Activated naive CD4-positive, alpha-beta T cell treated with anti-CD3 and anti-CD28 coated beads, Interleukin-2, amount 10 ng/mL, durations not matched to agents 7 days and 5 days (primary cell): ENCODE measurements at regions of chr18 and their contacts with region 1.

Region 1: DNA sequence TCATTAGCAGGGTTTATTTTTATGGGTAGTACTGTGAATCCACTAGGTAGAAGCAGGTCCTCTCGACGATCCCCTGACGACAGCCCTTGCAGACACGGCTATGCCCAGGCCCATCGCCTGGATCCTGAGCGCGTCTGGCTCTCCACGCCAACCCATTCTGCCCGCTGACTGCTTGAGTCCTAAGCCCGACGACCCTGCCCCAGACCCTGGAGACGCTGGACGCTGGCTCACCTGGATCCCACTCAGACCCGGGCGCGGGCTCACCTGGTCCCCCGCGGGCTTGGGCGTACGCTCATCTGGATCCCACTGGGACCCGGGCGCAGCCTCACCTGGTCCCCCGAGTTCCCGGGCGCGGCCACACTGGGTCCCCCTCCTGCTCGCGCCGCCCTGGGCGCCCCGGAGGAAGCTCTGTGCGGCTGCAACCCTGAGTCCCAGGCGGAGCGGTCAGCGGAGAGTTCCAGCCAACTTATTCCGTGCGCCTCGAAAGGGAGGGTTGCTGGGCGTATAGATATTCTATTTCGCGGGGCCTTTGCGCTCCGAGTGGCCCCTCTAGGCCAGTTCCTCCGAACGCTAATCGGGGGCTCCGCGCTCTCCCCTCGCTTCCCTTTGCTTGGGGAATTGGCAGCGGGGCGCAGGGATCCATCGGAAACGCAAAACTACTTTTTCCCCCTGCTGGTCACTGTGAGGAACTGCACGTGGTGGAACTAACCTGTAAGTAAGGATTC is 22.4 kb upstream of the RMP24 start:
- DNase-seq: peak; percentile 61
- H3K4me3 Mint-ChIP-seq: peak overlapping the region; percentile 73
- H3K27ac Mint-ChIP-seq: no peak overlapping the region
- H3K4me1 Mint-ChIP-seq: peaks cover 3% of the 10 kb centered on the region
- H3K27me3 Mint-ChIP-seq: peaks cover 23% of the 10 kb centered on the region

Region 2: GRCh38 chr18:35756506-35757117 is 193.5 kb before region 1 on chr18:
- CTCF ChIA-PET with region 1: interaction called, 13 read pairs
- DNase-seq: peak; percentile 67
- H3K4me3 Mint-ChIP-seq: no peak overlapping the region
- H3K27ac Mint-ChIP-seq: no peak overlapping the region
- H3K4me1 Mint-ChIP-seq: no peaks in the 10 kb centered on the region
- H3K27me3 Mint-ChIP-seq: peaks cover 31% of the 10 kb centered on the region

Region 3: DNA sequence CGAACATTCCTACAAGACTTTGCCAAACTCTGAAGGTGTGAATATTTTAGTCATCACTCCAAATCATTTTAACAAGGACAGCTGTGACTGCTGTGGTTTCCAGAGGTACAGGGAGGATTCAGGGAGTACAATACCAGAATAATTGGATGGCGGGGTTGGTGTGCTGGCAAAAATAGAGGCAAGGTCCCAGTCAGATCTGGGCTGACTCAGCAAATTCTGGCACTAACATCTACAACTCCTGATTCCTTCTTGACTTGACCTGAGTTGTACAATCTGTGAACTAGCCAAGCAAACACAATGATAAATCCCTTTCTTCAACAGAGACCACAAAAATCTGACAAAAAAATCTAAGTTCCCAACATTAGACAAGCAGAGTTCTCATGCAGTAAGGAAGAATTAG is 62.8 kb after region 1 on chr18:
- CTCF ChIA-PET with region 1: no interaction called
- DNase-seq: no peak
- H3K4me3 Mint-ChIP-seq: no peak overlapping the region
- H3K27ac Mint-ChIP-seq: no peak overlapping the region
- H3K4me1 Mint-ChIP-seq: no peaks in the 10 kb centered on the region
- H3K27me3 Mint-ChIP-seq: no peaks in the 10 kb centered on the region